Activated CD8-positive, alpha-beta T cell treated with anti-CD3 and anti-CD28 coated beads for 36 hours (primary cell): ENCODE measurements at regions of chrX and their contacts with region 1.

Region 1: DNA sequence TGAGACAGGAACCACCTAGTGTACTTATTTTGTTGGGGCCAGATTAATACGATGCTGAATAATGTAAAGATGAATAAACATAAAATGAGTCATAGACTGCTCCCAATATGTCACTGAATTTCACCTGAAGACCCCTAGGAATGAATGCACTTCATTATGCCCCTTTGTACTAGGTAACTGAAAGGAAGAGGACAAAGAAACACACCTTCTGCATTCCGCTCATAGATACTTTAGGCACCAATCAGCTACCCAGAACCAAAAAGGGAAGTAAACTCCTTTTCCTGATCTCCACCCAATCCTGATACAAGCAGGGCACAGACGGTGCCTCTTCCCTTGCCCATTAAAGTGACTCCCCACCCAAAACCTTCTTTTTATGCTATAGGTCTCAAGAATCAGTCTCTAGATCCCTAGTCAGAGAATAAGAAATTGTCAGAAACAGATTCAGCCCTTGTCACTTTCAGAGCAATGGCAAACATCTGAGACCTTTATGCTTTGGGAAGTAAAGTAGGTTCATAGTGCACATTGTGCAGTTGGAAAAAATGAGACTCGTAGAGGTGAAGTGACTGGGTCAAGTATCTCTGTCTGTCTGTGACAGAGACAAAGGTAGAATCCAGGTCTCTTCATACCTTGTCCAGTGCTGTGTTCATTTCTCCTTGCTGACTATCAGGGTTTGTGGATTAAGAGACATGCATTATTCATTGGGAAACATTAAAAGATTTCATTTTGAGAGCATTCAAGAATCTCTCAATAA is 2.3 kb downstream of the GPR174 start:
- DNase-seq: no peak
- ATAC-seq: peak; percentile 37
- H3K4me3 Mint-ChIP-seq: peak overlapping the region; percentile 96
- H3K27ac Mint-ChIP-seq: peak overlapping the region; percentile 89
- H3K4me1 Mint-ChIP-seq: peaks cover 26% of the 10 kb centered on the region
- H3K27me3 Mint-ChIP-seq: no peaks in the 10 kb centered on the region
- CTCF ChIP-seq: no peak

Region 2: DNA sequence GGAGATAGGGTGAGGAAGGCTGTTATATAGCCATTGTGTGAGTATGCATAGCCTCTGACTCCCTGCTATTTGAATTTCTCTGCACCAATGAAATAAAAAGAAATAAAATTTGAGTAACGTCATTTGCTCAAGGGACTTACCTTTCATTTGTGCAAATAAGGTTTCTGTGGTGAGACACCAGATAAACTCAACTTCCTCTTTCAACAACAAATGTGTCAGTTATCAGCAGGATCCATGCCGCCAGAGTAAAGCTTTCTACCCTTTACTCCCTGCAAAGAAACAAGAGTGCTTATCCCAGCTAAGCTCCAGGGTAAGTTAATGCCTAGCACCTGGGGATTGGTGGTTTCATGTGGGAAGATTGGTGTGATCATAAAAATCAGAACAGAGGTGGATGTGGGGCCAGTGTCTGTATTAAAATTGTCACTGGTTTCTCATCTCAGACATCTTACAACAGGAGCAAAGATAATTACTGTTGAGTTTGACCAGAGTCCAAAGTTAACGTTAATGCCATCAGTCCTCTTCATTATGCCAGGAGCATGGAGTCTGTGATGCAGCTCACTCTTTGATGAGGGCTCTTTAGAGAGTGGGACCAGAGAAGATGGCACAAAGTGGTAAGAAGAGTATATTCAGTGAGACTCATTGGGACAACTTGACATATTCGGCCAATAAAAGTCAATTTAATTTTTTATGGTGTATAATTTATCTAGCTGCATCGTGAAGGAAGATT is 201.5 kb before region 1 on chrX and contains the start of gene P2RY10:
- CTCF ChIA-PET with region 1: no interaction called
- POLR2A ChIA-PET with region 1: interaction called, 3 read pairs
- intact Hi-C with region 1: loop called (anchors 5 kb)
- DNase-seq: peak; percentile 26
- ATAC-seq: peak; percentile 80
- H3K4me3 Mint-ChIP-seq: peak within 1 kb of the TSS; percentile 98
- H3K27ac Mint-ChIP-seq: peak within 1 kb of the TSS; percentile 97
- H3K4me1 Mint-ChIP-seq: peaks cover 49% of the 10 kb centered on the region
- H3K27me3 Mint-ChIP-seq: no peaks in the 10 kb centered on the region
- CTCF ChIP-seq: no peak
- total RNA-seq, gene P2RY10: 42.1 to 42.2 TPM

Region 3: DNA sequence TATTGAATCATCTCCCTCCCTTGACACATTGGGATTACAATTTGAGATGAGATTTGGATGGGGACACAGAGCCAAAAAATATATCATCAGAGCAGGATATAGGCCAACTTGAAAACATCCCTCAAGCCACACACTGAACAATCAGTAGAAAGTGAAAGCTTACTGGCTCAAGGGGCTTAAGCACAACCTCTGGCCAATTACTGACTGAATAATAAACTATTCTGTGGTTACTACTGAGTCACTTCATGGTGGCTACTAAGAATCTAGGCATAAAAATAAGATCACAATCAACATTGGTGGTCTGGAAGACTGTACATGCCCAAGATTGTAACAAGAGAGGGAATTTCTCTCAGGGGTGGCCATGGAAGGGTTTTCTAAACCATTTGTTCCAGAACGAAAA is 29.7 kb before region 1 on chrX:
- CTCF ChIA-PET with region 1: no interaction called
- POLR2A ChIA-PET with region 1: no interaction called
- intact Hi-C with region 1: no loop called
- DNase-seq: no peak
- ATAC-seq: peak; percentile 86
- H3K4me3 Mint-ChIP-seq: peak overlapping the region; percentile 41
- H3K27ac Mint-ChIP-seq: peak overlapping the region; percentile 86
- H3K4me1 Mint-ChIP-seq: peaks cover 39% of the 10 kb centered on the region
- H3K27me3 Mint-ChIP-seq: no peaks in the 10 kb centered on the region
- CTCF ChIP-seq: no peak

Region 4: GRCh38 chrX:79161655-79162054 is 14.8 kb after region 1 on chrX:
- CTCF ChIA-PET with region 1: interaction called, 4 read pairs
- POLR2A ChIA-PET with region 1: interaction called, 14 read pairs
- intact Hi-C with region 1: loop called (anchors 2 kb)
- DNase-seq: peak; percentile 61
- ATAC-seq: peak; percentile 82
- H3K4me3 Mint-ChIP-seq: peak overlapping the region; percentile 77
- H3K27ac Mint-ChIP-seq: peak overlapping the region; percentile 99
- H3K4me1 Mint-ChIP-seq: peaks cover 67% of the 10 kb centered on the region
- H3K27me3 Mint-ChIP-seq: no peaks in the 10 kb centered on the region
- CTCF ChIP-seq: no peak

Region 5: GRCh38 chrX:79167462-79167861 is 20.6 kb after region 1 on chrX:
- CTCF ChIA-PET with region 1: interaction called, 4 read pairs
- POLR2A ChIA-PET with region 1: interaction called, 13 read pairs
- intact Hi-C with region 1: no loop called
- DNase-seq: no peak
- ATAC-seq: peak; percentile 35
- H3K4me3 Mint-ChIP-seq: peak overlapping the region; percentile 64
- H3K27ac Mint-ChIP-seq: peak overlapping the region; percentile 91
- H3K4me1 Mint-ChIP-seq: peaks cover 87% of the 10 kb centered on the region
- H3K27me3 Mint-ChIP-seq: no peaks in the 10 kb centered on the region
- CTCF ChIP-seq: no peak

Region 6: DNA sequence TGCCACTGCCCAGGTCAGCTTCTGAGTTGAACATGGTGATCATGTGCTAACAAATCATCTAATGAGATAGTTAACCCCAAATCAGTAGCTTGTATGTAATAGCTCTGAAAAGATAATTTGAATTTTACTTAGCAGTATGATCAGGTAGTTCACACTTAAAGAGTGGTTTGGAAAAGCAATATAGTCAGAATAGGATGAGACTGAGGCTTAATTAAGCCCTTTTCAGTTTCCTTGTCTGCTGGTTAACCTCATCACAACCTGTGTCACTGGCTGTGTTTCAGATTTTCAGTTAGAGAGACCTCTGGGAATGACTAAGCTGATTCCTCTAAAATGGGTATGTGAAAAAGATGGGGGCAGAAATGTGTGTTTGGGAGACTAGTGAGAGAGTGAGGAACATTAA is 35.8 kb after region 1 on chrX:
- CTCF ChIA-PET with region 1: no interaction called
- POLR2A ChIA-PET with region 1: no interaction called
- intact Hi-C with region 1: loop called (anchors 5 kb)
- DNase-seq: no peak
- ATAC-seq: peak; percentile 82
- H3K4me3 Mint-ChIP-seq: peak overlapping the region; percentile 47
- H3K27ac Mint-ChIP-seq: peak overlapping the region; percentile 94
- H3K4me1 Mint-ChIP-seq: peaks cover 61% of the 10 kb centered on the region
- H3K27me3 Mint-ChIP-seq: no peaks in the 10 kb centered on the region
- CTCF ChIP-seq: no peak

Region 7: DNA sequence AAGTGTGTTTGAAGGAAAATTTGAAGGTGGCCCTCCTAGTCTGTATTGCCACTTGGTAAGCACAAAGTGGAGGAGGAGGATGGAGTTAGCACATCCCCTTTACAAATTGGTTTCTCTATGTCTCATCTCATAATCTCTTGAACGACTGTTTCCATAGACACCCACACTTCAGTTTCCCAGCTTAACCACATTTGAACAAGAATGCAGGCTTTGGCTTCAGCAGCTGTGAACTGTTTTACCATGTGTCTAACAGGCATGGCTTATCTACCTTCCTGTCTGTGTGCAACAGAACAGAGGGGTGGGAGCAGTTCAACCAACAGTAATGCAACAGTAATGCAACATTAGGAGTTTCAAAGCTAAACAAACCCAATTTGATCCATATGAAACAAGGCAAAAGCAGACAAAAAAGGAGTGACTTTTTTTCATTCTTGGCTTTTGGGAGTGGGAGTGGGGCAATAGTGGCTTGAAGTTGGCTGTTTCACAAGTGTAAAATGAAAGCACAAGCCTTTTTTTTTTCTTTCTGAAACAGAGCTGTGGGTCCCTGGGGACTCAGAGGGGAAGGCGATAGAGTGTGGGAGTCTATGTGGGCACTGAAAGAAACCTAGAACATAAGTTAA is 112.4 kb after region 1 on chrX:
- CTCF ChIA-PET with region 1: interaction called, 4 read pairs
- POLR2A ChIA-PET with region 1: no interaction called
- intact Hi-C with region 1: loop called (anchors 5 kb)
- DNase-seq: peak; percentile 70
- ATAC-seq: peak; percentile 81
- H3K4me3 Mint-ChIP-seq: peak overlapping the region; percentile 66
- H3K27ac Mint-ChIP-seq: peak overlapping the region; percentile 92
- H3K4me1 Mint-ChIP-seq: peaks cover 72% of the 10 kb centered on the region
- H3K27me3 Mint-ChIP-seq: no peaks in the 10 kb centered on the region
- CTCF ChIP-seq: no peak